ENCODE measurements at regions of chr6 and their contacts with region 1.

Region 1: GRCh38 chr6:25556516-25556915 is 95.5 kb upstream of the SCGN start:
- DNase-seq: peak; percentile 6
- H3K4me3 ChIP-seq: no peak overlapping the region
- H3K27me3 ChIP-seq: no peaks in the 10 kb centered on the region
- CTCF ChIP-seq: peak; percentile 84

Region 2: GRCh38 chr6:25534942-25535631 is 21.4 kb before region 1 on chr6:
- CTCF ChIA-PET with region 1: interaction called, 11 read pairs
- POLR2A ChIA-PET with region 1: no interaction called
- DNase-seq: no peak
- H3K4me3 ChIP-seq: no peak overlapping the region
- H3K27me3 ChIP-seq: no peaks in the 10 kb centered on the region
- CTCF ChIP-seq: no peak

Region 3: DNA sequence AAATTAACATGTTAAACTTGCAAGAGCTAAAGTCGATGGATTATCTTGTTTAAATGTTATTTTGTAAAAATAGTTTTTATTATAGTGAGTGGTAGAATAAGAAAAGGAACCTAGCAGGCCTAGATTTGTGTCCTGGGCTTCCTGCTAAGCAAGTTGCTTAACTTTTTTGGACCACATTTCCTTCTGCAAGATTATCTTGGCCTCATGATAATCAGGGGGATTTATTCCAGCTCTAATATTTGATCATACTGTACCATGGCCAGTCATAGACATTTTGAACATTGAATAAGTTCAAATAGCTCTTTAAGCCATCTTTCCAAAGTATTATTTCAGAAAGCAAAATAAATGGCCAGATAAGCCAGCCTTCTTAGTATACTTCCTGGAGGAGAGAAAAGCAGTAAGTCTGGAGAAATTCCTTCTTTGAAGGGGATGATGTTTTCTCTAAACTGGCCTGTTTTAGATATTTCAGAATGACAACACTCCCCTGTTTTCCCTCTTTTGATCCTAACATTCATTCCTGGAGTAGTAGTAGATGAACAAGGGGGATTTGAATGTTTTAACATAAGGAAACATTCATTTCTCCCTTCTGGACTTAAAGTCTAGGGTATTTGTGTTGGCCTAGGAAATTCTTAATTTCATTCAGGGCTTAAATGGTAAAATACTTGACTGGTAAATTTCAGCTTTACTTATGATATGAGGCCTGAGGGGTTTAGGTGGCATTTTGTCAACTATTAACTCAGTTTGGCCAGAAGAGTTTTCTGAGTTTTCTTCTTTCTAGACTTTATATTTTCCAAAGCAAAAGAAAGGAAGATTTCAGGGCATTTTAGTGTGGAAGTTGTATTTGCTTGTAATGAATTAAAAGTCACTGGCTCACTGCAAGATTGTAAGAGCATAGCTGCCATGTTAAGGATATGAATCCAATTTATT is 13.3 kb before region 1 on chr6:
- CTCF ChIA-PET with region 1: interaction called, 27 read pairs
- POLR2A ChIA-PET with region 1: no interaction called
- DNase-seq: no peak
- H3K4me3 ChIP-seq: no peak overlapping the region
- H3K27me3 ChIP-seq: no peaks in the 10 kb centered on the region
- CTCF ChIP-seq: no peak

Region 4: DNA sequence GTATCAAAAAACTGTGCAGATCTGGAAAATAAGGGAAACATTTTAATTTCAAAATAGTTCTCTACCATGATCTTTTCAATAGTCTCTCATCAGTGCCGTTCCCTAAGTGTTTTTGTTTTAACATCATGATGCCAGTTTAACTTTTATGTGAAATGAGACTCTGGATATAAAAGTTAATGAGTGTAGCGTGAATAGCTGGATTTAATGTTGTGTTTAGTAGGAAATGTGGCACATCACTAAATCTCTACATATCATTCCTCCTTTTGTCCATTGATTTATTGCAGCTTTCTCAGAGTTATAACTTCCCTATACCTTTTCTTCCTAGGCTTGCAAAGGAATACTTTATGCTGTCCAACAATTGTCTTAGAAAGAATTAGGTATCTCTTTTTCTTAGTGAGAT is 14.1 kb after region 1 on chr6:
- CTCF ChIA-PET with region 1: interaction called, 35 read pairs
- POLR2A ChIA-PET with region 1: no interaction called
- DNase-seq: no peak
- H3K4me3 ChIP-seq: no peak overlapping the region
- H3K27me3 ChIP-seq: no peaks in the 10 kb centered on the region
- CTCF ChIP-seq: no peak